ENCODE measurements at regions of chr11 and their contacts with region 1.

Region 1: GRCh38 chr11:10808553-10809372 is at the start of gene EIF4G2:
- DNase-seq: peak; percentile 96 to 99 (median 97)
- ATAC-seq: peak; percentile 91
- H3K4me3 ChIP-seq: peak within 1 kb of the TSS; percentile 86
- H3K4me3 Mint-ChIP-seq: peak within 1 kb of the TSS; percentile 99
- H3K27ac ChIP-seq: peak within 1 kb of the TSS; percentile 95 to 99
- H3K27ac Mint-ChIP-seq: peak within 1 kb of the TSS; percentile 100
- H3K4me1 ChIP-seq: peaks cover 30% of the 10 kb centered on the region
- H3K4me1 Mint-ChIP-seq: peaks cover 59% of the 10 kb centered on the region
- H3K27me3 ChIP-seq: no peaks in the 10 kb centered on the region
- H3K27me3 Mint-ChIP-seq: no peaks in the 10 kb centered on the region
- CTCF ChIP-seq: no peak
- total RNA-seq, gene EIF4G2: 1,001 to 1,008 TPM

Region 2: DNA sequence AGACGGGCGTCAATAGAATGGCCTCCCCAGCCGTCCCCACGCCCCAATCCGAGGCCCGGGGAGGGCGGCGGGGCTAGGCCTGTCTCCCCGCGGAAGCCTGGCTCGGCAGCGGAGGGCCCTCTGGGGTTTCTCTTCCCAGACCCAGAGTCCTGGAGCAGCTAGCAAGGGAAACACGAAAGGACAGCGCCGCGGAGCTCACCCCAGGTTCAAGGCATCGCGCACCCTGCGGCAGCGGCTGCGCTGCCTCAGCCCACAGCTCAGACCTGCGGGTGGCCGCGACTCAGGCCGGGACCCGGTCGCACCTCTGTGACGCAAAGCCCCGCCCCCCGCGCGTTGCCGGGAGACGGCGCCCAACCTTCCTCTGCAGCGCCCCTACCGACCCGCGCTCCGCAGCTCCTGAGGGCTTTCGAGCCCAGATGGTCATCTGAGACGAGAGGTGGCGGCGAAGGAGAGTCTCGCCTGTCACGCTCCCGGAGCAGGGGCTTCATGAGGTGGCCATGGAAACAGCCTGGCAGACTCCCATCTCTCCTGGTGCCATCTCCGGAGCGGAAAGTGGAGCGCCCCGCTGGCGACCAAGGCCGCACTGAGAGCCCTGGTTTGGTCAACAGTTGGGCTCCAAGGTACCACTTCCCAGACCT is 267.7 kb before region 1 on chr11 and contains the start of gene RNF141:
- CTCF ChIA-PET with region 1: interaction called, 3 read pairs
- POLR2A ChIA-PET with region 1: interaction called, 11 read pairs
- intact Hi-C with region 1: no loop called
- DNase-seq: peak; percentile 85 to 97 (median 94)
- ATAC-seq: peak; percentile 97
- H3K4me3 ChIP-seq: peak within 1 kb of the TSS; percentile 70
- H3K4me3 Mint-ChIP-seq: peak within 1 kb of the TSS; percentile 93
- H3K27ac ChIP-seq: peak within 1 kb of the TSS; percentile 25 to 72
- H3K27ac Mint-ChIP-seq: peak within 1 kb of the TSS; percentile 77
- H3K4me1 ChIP-seq: peaks cover 13% of the 10 kb centered on the region
- H3K4me1 Mint-ChIP-seq: peaks cover 44% of the 10 kb centered on the region
- H3K27me3 ChIP-seq: no peaks in the 10 kb centered on the region
- H3K27me3 Mint-ChIP-seq: no peaks in the 10 kb centered on the region
- CTCF ChIP-seq: peak; percentile 87
- total RNA-seq, gene RNF141: 18.0 to 19.0 TPM

Region 3: DNA sequence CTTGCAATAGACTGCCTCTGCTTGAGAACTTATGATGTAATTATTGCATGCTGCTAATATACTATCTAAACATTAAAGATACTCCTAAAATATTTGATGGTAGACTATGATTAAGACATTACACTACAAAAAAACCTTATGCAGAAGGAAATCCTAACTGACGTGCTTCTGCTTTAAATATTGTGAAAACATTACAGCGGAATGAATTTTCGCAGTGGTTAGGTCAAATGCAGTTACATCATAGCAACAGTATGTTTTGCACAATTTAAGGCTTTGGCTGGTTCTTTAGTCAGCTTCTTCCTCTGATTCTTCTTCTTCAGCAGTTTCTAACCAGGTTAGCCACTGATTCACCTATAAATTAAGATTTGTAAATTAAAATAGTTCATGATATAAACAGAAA is 11.2 kb before region 1 on chr11:
- CTCF ChIA-PET with region 1: interaction called, 16 read pairs
- POLR2A ChIA-PET with region 1: interaction called, 62 read pairs
- intact Hi-C with region 1: loop called in 1 of 2 experiments (anchors 2 kb)
- DNase-seq: no peak
- ATAC-seq: no peak
- H3K4me3 ChIP-seq: no peak overlapping the region
- H3K4me3 Mint-ChIP-seq: no peak overlapping the region
- H3K27ac ChIP-seq: no peak overlapping the region
- H3K27ac Mint-ChIP-seq: peak overlapping the region; percentile 45
- H3K4me1 ChIP-seq: peaks cover 43% of the 10 kb centered on the region
- H3K4me1 Mint-ChIP-seq: peaks cover 76% of the 10 kb centered on the region
- H3K27me3 ChIP-seq: no peaks in the 10 kb centered on the region
- H3K27me3 Mint-ChIP-seq: no peaks in the 10 kb centered on the region
- CTCF ChIP-seq: no peak

Region 4: GRCh38 chr11:10857709-10858438 is 49.1 kb after region 1 on chr11 and contains the start of gene ZBED5:
- CTCF ChIA-PET with region 1: interaction called, 18 read pairs
- POLR2A ChIA-PET with region 1: interaction called, 478 read pairs
- intact Hi-C with region 1: loop called (anchors 1 kb)
- DNase-seq: peak; percentile 90 to 98 (median 94)
- ATAC-seq: peak; percentile 89
- H3K4me3 ChIP-seq: peak within 1 kb of the TSS; percentile 87
- H3K4me3 Mint-ChIP-seq: peak within 1 kb of the TSS; percentile 100
- H3K27ac ChIP-seq: peak within 1 kb of the TSS; percentile 92 to 96
- H3K27ac Mint-ChIP-seq: peak within 1 kb of the TSS; percentile 99
- H3K4me1 ChIP-seq: peaks cover 18% of the 10 kb centered on the region
- H3K4me1 Mint-ChIP-seq: peaks cover 66% of the 10 kb centered on the region
- H3K27me3 ChIP-seq: no peaks in the 10 kb centered on the region
- H3K27me3 Mint-ChIP-seq: no peaks in the 10 kb centered on the region
- CTCF ChIP-seq: no peak
- total RNA-seq, gene ZBED5: 71.1 to 72.0 TPM

Region 5: GRCh38 chr11:10933455-10934292 is 124.9 kb after region 1 on chr11:
- CTCF ChIA-PET with region 1: interaction called, 3 read pairs
- POLR2A ChIA-PET with region 1: interaction called, 12 read pairs
- intact Hi-C with region 1: no loop called
- DNase-seq: peak; percentile 67 to 90 (median 80)
- ATAC-seq: peak; percentile 89
- H3K4me3 ChIP-seq: peak overlapping the region; percentile 56
- H3K4me3 Mint-ChIP-seq: peak overlapping the region; percentile 90
- H3K27ac ChIP-seq: no peak overlapping the region
- H3K27ac Mint-ChIP-seq: peak overlapping the region; percentile 52
- H3K4me1 ChIP-seq: peaks cover 24% of the 10 kb centered on the region
- H3K4me1 Mint-ChIP-seq: peaks cover 24% of the 10 kb centered on the region
- H3K27me3 ChIP-seq: peaks cover 25 to 31% of the 10 kb centered on the region in 2 experiments
- H3K27me3 Mint-ChIP-seq: peaks cover 49% of the 10 kb centered on the region
- CTCF ChIP-seq: peak; percentile 94

Measured in CD4-positive, alpha-beta T cell (primary cell).